ENCODE measurements at regions of chr17 and their contacts with region 1.

Region 1: GRCh38 chr17:7903154-7904103 is 12.7 kb downstream of the RNF227 start:
- DNase-seq: no peak
- ATAC-seq: no peak
- H3K4me3 ChIP-seq: no peak overlapping the region
- H3K27ac ChIP-seq: no peak overlapping the region
- H3K4me1 ChIP-seq: no peaks in the 10 kb centered on the region
- H3K27me3 ChIP-seq: no peaks in the 10 kb centered on the region
- CTCF ChIP-seq: no peak
- POLR2A ChIP-seq: no peak

Region 2: DNA sequence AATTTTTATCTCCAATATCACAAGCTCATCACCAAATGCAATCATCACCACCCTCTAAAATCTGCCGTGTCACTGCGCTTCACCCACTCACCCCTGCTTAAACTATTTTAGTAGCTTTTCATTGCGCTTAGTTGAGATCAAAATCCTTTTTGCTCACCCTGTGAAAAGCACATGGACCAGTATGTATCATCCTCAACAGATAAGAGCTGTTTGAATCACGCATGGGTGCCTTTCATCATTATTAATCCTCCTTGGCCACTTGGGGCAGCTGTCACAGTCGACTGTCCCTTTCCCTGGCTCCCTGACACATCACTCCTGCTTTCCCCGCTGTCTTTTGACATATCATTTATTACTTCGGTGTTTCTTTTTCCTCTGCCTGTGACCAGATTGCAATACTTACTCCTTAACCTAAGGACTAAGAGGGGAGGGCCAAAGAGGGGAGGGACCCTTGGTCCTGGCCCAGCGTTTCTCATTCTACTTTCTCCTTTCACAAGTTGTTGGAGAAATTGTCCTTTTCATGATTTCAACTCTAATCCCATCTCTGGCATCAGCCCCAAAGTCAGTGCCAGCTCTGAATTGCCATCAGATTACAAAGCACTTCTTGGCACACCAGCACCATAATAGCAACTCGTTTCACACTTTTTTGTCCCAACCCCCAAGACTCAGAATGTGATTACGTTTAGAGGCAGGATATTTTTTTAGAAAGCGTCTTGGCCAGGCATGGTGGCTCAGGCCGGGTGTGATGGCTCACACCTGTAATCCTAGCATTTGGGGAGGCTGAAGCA is 78.0 kb before region 1 on chr17:
- intact Hi-C with region 1: loop called in 1 of 2 experiments (anchors 10 kb)
- DNase-seq: no peak
- ATAC-seq: peak; percentile 37 to 71 (median 47)
- H3K4me3 ChIP-seq: no peak overlapping the region
- H3K27ac ChIP-seq: no peak overlapping the region
- H3K4me1 ChIP-seq: no peaks in the 10 kb centered on the region
- H3K27me3 ChIP-seq: no peaks in the 10 kb centered on the region
- CTCF ChIP-seq: peak in 2 of 4 donors; percentile 15 to 23
- POLR2A ChIP-seq: no peak

Region 3: GRCh38 chr17:7851438-7852256 is 51.8 kb before region 1 on chr17:
- intact Hi-C with region 1: no loop called
- DNase-seq: peak; percentile 91 to 92 (median 92)
- ATAC-seq: peak; percentile 79 to 91 (median 83)
- H3K4me3 ChIP-seq: peak overlapping the region in 1 of 3 donors; percentile 5
- H3K27ac ChIP-seq: no peak overlapping the region
- H3K4me1 ChIP-seq: peaks cover 0 to 15% (median 4%) of the 10 kb centered on the region in 4 donors
- H3K27me3 ChIP-seq: no peaks in the 10 kb centered on the region
- CTCF ChIP-seq: peak; percentile 96 to 99 (median 97)
- POLR2A ChIP-seq: no peak

Region 4: GRCh38 chr17:7982666-7983065 is 79.2 kb after region 1 on chr17:
- intact Hi-C with region 1: loop called in 1 of 2 experiments (anchors 5 kb)
- DNase-seq: peak in 1 of 3 donors; percentile 3
- ATAC-seq: no peak
- H3K4me3 ChIP-seq: no peak overlapping the region
- H3K27ac ChIP-seq: no peak overlapping the region
- H3K4me1 ChIP-seq: no peaks in the 10 kb centered on the region
- H3K27me3 ChIP-seq: no peaks in the 10 kb centered on the region
- CTCF ChIP-seq: no peak
- POLR2A ChIP-seq: no peak

Region 5: GRCh38 chr17:8041249-8041928 is 138.0 kb after region 1 on chr17:
- intact Hi-C with region 1: loop called in 1 of 2 experiments (anchors 10 kb)
- DNase-seq: no peak
- ATAC-seq: peak; percentile 73 to 92 (median 80)
- H3K4me3 ChIP-seq: no peak overlapping the region
- H3K27ac ChIP-seq: no peak overlapping the region
- H3K4me1 ChIP-seq: peaks cover 0 to 6% (median 0%) of the 10 kb centered on the region in 4 donors
- H3K27me3 ChIP-seq: no peaks in the 10 kb centered on the region
- CTCF ChIP-seq: peak; percentile 54 to 78 (median 68)
- POLR2A ChIP-seq: no peak

Measured in right lobe of liver (tissue), 6 donors.